Colonic mucosa (tissue), 4 donors: ENCODE measurements at regions of chr19 and their contacts with region 1.

Region 1: DNA sequence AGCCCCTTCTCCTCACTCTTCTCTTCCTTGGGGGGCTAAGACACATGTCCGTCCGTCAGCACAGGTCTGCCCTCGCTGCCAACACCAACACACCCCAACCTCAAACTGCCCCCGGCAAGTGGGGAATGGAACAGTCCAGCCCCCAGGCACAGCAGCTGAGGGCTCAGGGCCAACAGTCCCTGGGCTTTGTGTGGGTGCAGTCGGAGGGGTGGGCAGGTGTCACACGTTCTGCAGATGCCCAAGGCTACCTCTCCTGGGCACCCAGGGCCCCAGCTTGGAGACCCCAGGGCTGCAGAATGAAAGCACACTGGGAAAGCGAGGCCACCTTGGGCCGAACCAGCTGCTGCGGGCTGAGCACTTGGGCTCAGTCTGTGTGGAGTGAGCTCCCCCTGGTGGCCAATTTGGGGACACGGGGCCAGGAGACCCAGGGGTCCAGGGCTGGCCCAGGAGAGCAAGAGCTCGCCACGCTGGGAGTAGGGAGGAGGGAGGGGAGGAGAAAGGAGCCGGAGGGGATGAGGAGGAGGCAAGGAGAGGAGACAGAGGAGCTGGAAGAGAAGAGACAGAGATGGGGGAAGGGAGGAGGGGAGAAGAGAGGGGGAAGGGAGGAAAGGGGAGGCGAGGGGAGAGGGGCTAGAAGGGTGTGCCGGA is 14.0 kb upstream of the ATP8B3 start:
- DNase-seq: peak; percentile 81
- H3K4me3 ChIP-seq: no peak overlapping the region
- H3K27ac ChIP-seq: no peak overlapping the region
- H3K4me1 ChIP-seq: no peaks in the 10 kb centered on the region
- H3K27me3 ChIP-seq: no peaks in the 10 kb centered on the region
- CTCF ChIP-seq: peak; percentile 86

Region 2: GRCh38 chr19:1747285-1748114 is 78.5 kb before region 1 on chr19:
- intact Hi-C with region 1: no loop called
- DNase-seq: peak; percentile 21
- H3K4me3 ChIP-seq: no peak overlapping the region
- H3K27ac ChIP-seq: no peak overlapping the region
- H3K4me1 ChIP-seq: peaks cover 10% of the 10 kb centered on the region
- H3K27me3 ChIP-seq: peaks cover 67% of the 10 kb centered on the region
- CTCF ChIP-seq: no peak

Region 3: DNA sequence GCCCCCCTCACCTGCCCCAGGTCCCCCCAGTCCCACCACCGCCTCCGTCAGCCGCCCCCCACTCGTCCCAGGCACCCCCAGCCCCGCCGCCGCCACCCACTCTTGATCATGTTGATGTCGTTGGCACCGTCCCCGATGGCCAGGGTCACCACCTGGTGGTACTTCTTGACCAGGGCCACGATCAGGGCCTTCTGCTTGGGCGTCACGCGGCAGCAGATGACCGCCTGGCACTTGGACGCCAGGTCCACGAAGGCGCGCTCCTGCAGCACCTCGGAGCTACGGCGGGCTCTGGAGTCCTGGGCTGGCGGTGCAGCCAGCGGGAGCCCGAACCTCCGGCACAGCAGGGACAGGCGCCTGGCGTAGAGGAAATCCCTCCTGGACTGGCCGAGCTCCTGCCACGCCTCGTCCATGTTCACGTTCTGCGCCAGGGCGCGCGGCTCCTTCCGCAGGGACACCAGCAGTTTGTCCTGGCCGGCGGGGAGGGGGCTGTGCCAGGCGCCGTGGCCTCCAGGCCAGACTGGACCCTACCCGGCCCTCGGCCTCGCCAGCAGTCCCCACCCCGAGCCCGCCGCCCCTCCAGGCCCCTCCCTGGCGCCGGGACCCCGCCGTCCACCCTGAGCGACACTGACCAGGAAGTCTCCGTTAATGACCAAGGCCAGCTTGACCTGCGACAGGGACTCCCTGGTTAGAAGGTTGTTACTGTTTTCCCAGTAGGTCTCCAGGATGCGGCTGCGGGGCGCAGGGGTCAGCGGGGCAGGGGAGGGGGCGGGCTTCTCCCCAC is 36.6 kb before region 1 on chr19:
- intact Hi-C with region 1: loop called (anchors 5 kb)
- DNase-seq: no peak
- H3K4me3 ChIP-seq: no peak overlapping the region
- H3K27ac ChIP-seq: no peak overlapping the region
- H3K4me1 ChIP-seq: no peaks in the 10 kb centered on the region
- H3K27me3 ChIP-seq: peaks cover 12% of the 10 kb centered on the region
- CTCF ChIP-seq: no peak

Region 4: GRCh38 chr19:1907563-1908363 is 81.7 kb after region 1 on chr19:
- intact Hi-C with region 1: no loop called
- DNase-seq: peak; percentile 82
- H3K4me3 ChIP-seq: peak overlapping the region; percentile 23
- H3K27ac ChIP-seq: peak overlapping the region; percentile 73
- H3K4me1 ChIP-seq: peaks cover 9% of the 10 kb centered on the region
- H3K27me3 ChIP-seq: no peaks in the 10 kb centered on the region
- CTCF ChIP-seq: no peak